ENCODE measurements at regions of chr11 and their contacts with region 1.

Region 1: DNA sequence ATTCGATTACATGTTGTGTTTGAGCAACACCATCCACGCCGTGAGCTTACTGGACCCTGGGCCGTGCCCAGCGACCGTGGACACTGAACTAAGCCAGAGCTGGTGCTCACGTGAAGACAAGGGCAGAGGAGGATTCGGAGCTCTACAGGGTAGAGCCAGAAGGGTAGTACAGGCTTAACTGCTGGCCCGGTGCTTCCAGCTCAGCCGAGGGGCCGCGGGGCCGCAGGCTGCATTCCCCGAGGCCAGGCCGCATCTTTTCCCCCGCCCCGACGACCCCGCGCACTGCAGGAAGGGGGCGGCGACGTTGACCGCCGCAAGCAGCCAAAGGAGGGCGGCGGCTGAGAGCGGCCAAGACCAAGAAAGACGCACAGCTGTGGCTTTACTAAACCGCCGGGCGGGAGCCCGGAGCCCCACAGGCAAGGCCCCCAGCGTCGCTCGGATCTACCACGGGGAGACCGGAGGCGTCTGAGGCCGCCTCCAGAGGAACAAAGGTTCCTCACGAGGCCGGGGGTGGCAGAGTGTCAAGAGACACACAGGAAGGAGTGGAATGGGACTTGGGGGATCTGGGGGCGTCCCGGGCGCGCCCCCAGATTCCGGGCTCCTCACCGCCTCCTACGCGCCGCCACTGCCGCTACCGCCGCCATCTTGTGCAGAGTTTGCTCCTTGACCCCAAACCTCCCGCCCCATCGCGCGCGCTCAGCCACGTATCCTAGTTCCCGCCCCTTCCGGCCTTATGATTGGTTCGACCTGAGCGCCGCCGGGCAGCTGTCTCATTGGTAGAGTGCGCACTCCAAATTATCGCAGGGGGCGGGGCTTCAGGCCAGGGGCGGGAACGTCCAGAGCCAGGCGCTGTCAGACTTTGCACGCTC is at the start of gene GANAB:
- DNase-seq: peak; percentile 97 to 99 (median 99)
- H3K4me3 ChIP-seq: peak within 1 kb of the TSS; percentile 62 to 100 (median 96)
- H3K27ac ChIP-seq: peak within 1 kb of the TSS; percentile 26 to 98 (median 92)
- H3K27me3 ChIP-seq: no peaks in the 10 kb centered on the region
- CTCF ChIP-seq: peak in 28 of 56 donors; percentile 8 to 46 (median 28)
- total RNA-seq, gene GANAB: 107 to 174 (median 137) TPM

Region 2: DNA sequence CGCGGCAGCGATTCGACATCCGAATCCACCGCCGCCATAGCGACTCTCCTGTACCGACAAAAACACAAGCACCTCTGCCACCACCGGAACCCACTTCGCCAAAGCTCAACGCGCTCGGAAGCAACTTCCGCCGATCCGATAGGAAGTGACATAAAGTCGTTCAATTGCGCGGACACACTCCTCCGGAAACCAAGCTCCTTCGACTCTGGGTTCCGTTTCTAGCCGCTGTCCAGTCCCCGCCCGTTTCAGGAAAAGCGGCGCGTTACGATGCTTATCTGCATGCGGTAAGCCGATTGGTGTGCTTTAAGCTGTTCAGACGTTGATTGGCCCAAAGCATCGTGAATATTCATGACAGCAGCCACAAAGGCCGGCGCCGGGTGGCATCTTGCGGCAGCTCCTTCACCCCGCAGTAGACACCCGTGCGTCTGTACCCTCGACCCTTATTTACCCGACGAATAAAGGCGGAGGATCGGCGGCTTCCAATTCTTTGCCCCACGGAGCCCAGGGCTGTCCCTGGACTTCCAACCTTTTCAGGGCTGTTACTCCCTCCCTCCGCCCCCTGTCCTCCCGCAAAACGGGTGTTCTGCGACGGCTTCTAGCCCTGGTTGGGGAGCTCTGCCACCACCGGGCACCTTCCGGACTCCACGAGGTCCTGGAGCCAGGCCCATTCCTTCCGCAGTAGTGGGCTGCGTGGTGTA is 54.6 kb before region 1 on chr11 and contains the start of gene TUT1:
- intact Hi-C with region 1: no loop called
- DNase-seq: peak; percentile 89 to 99 (median 98)
- H3K4me3 ChIP-seq: peak within 1 kb of the TSS; percentile 53 to 100 (median 88)
- H3K27ac ChIP-seq: peak within 1 kb of the TSS; percentile 83 to 99 (median 97)
- H3K27me3 ChIP-seq: no peaks in the 10 kb centered on the region
- CTCF ChIP-seq: peak in 41 of 56 donors; percentile 11 to 63 (median 35)
- total RNA-seq, gene TUT1: 11.6 to 30.9 (median 19.4) TPM

Region 3: DNA sequence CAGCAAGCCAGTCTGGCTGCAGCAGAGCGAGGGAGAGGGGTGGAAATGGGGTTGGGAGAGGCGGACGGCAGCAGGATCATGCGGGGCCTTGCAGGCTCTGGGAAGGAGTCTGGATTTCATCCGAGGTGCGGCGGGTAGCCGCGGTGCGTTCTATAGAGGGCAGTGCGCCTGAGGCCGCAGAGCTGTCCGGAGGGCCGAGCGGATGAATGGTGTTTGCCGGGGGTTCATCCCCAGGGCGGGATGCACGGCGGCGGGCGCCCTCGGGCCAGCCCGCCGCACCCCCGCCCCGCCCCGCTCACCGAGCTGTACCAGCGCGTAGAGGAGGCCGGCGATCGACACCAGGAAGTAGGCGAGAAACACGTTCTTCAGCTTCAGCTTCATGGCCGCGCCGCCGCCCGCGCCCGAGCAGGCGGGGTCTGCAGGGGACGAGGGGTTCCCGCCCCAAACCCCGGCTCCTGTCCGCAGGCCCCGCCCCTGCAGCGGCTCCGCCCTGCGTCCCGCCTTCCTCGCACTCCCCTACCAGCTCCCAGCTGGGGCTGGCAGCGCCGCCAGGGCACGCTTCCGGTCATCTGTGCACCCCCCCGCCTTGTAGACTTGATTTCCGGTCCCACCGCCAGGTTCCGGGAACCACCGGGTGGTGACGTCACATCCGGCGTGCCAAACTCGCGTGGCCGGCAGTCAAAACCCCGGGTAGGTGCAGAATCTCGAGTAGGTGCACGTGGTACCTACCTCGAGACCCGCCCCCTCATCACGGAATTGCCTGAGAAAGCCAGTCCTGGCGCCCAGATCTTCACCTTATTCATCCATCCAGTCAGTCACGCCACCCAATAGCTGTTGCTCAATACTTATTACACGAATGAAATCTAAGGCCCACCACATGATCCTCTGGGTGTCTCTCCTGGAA is 24.4 kb before region 1 on chr11 and contains the start of gene B3GAT3:
- intact Hi-C with region 1: loop called (anchors 1 to 2 kb)
- DNase-seq: peak; percentile 96 to 99 (median 98)
- H3K4me3 ChIP-seq: peak within 1 kb of the TSS; percentile 59 to 96 (median 82)
- H3K27ac ChIP-seq: peak within 1 kb of the TSS; percentile 53 to 97 (median 90)
- H3K27me3 ChIP-seq: no peaks in the 10 kb centered on the region
- CTCF ChIP-seq: peak in 39 of 56 donors; percentile 3 to 66 (median 35)
- total RNA-seq, gene B3GAT3: 52.5 to 99.7 (median 70.4) TPM

Measured in dorsolateral prefrontal cortex (tissue), 120 donors.